Posterior vena cava (tissue), 2 donors: ENCODE measurements at regions of chr2 and their contacts with region 1.

Region 1: DNA sequence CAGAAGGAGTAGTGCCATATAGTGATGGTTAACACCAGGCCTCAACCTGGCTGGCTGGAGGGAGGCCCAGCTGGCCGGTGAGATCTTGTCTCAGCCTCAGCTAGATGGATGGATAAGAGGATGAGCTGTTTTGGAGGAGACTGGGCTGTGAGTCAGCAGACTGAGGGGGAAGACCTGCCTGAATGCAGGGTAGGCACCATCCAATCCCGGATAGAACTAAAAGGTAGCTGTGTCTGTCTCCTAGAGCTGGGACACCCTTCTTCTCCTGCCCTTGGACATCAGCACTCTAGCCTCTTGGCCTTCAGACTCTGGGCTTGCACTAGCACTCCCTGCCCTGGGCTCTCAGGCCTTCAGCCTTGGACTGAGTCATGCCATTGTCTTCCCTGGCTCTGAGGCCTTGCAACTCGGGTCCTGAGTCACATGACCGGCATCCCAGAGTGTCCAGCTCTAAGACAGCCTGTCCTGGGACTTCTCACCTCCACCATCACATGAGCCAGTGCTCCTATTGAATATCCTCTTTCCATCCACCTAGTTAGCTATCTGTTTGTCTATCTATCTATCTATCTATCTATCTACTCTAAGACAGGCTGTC is 131.3 kb downstream of the TPO start:
- DNase-seq: no peak

Region 2: GRCh38 chr2:1842945-1843344 is 298.4 kb after region 1 on chr2:
- intact Hi-C with region 1: loop called in 1 of 2 experiments (anchors 1 kb)
- DNase-seq: peak; percentile 81

Region 3: GRCh38 chr2:2919026-2919969 is 1374.7 kb after region 1 on chr2:
- intact Hi-C with region 1: loop called in 1 of 2 experiments (anchors 5 kb)
- DNase-seq: no peak